ENCODE measurements at regions of chr11 and their contacts with region 1.

Region 1: GRCh38 chr11:47454180-47454644 is 5.3 kb upstream of the RAPSN start:
- DNase-seq: peak in 8 of 9 donors; percentile 51 to 76 (median 68)
- ATAC-seq: peak; percentile 99
- H3K4me3 ChIP-seq: no peak overlapping the region
- H3K4me3 Mint-ChIP-seq: peak overlapping the region in 1 of 10 donors; percentile 41
- H3K27ac ChIP-seq: no peak overlapping the region
- H3K27ac Mint-ChIP-seq: peak overlapping the region in 6 of 9 donors; percentile 16 to 49 (median 44)
- H3K4me1 ChIP-seq: no peaks in the 10 kb centered on the region
- H3K4me1 Mint-ChIP-seq: peaks cover 0 to 7% (median 4%) of the 10 kb centered on the region in 7 donors
- H3K27me3 ChIP-seq: no peaks in the 10 kb centered on the region
- H3K27me3 Mint-ChIP-seq: no peaks in the 10 kb centered on the region

Region 2: DNA sequence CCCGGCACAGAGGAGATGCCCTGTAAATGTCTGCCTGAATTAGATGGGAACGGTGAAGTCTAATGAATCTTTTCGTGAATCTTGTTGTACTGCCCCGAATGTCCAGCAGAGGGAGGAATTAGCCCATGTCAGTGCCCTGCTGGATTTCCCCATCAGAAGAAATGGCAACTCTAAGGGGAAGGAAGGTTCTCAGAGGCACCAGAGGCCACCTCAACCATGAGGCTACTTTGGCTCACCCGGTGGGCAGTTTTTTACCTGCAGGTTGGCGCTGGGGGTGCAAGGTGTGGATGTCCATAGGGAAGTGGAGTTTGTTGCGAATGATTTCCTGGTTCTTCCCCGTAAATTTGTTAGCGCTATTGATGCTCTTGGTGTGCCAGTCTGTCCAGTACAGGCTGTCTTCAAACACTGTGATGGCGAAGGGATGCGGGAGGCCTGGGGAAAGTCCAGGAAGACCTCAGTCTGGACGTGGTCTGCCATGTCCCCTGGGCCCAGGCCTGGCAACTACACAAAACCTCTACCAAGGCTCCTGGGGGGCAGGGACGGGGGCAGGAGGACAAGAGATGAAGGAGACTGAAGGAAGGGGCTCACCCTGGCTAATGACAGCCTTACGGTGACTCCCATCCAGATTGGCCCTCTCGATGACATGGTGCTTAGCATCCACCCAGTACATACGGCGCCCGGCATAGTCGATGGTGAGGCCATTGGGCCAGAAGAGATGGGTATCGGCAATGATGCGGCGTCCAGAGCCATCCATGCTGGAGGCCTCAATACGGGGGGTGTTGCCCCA is 564.3 kb before region 1 on chr11:
- CTCF ChIA-PET with region 1: no interaction called
- POLR2A ChIA-PET with region 1: no interaction called
- intact Hi-C with region 1: loop called in 1 of 2 experiments (anchors 1 kb)
- DNase-seq: peak; percentile 40 to 80 (median 72)
- ATAC-seq: peak; percentile 95
- H3K4me3 ChIP-seq: no peak overlapping the region
- H3K4me3 Mint-ChIP-seq: no peak overlapping the region
- H3K27ac ChIP-seq: no peak overlapping the region
- H3K27ac Mint-ChIP-seq: no peak overlapping the region
- H3K4me1 ChIP-seq: no peaks in the 10 kb centered on the region
- H3K4me1 Mint-ChIP-seq: peaks cover 0 to 6% (median 0%) of the 10 kb centered on the region in 7 donors
- H3K27me3 ChIP-seq: no peaks in the 10 kb centered on the region
- H3K27me3 Mint-ChIP-seq: peaks cover 0 to 7% (median 0%) of the 10 kb centered on the region in 5 donors

Region 3: GRCh38 chr11:47233989-47234668 is 220.1 kb before region 1 on chr11:
- CTCF ChIA-PET with region 1: interaction called, 3 read pairs
- POLR2A ChIA-PET with region 1: no interaction called
- intact Hi-C with region 1: loop called in 1 of 2 experiments (anchors 1 kb)
- DNase-seq: peak in 6 of 9 donors; percentile 17 to 46 (median 32)
- ATAC-seq: peak; percentile 8
- H3K4me3 ChIP-seq: peak overlapping the region; percentile 38
- H3K4me3 Mint-ChIP-seq: peak overlapping the region; percentile 35 to 90 (median 80)
- H3K27ac ChIP-seq: peak overlapping the region; percentile 81
- H3K27ac Mint-ChIP-seq: peak overlapping the region; percentile 77 to 99 (median 94)
- H3K4me1 ChIP-seq: peaks cover 5 to 13% of the 10 kb centered on the region in 2 donors
- H3K4me1 Mint-ChIP-seq: peaks cover 11 to 34% (median 30%) of the 10 kb centered on the region in 7 donors
- H3K27me3 ChIP-seq: no peaks in the 10 kb centered on the region
- H3K27me3 Mint-ChIP-seq: no peaks in the 10 kb centered on the region

Region 4: DNA sequence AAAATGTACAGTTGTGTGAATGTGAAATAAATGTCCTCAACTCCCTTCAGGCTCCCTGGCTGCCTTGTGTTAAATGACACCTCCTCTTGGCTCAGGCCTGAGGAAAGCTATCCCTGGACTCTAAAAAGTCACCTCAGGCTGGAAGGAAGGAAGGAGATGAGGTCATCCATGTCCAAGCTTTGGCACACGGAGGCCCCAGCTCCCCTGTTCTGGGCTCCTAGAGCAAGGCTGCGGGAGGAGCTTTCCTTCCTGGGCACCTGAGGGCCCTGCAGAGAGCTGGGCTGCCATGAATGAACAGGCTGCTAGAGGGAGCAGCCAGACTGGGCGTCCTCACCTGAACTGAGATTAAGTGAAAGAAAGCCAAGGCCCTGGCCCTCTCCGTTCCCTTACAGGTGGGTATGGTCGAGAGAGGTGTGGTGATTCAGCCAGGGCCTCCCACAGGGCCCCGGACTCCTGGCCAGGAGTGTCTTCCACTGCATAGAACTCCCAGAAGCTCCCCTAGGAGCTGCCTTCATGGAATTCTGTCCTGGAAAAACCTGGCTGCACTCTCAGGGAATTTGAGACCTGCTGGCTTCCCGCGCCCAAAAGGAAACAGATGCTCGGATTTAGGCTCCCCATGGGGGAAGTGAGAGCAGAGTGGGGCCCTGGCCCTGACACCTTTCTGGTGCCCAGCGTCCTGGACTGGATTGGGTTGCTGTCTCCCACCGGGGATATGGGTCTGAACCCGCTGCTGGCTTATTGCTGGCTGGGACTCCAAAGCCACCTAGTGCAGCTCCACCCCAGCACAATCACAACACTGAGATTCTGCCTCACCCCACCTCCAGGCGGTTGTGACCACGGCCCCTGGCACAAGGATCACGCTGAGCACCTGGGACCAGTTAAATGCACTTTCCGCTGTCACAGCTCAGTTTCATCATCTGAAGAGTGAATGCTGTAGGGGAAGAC is 124.0 kb before region 1 on chr11:
- CTCF ChIA-PET with region 1: interaction called, 3 read pairs
- POLR2A ChIA-PET with region 1: no interaction called
- intact Hi-C with region 1: loop called in 1 of 2 experiments (anchors 1 kb)
- DNase-seq: peak in 2 of 9 donors; percentile 11 to 13
- ATAC-seq: no peak
- H3K4me3 ChIP-seq: no peak overlapping the region
- H3K4me3 Mint-ChIP-seq: no peak overlapping the region
- H3K27ac ChIP-seq: no peak overlapping the region
- H3K27ac Mint-ChIP-seq: peak overlapping the region in 4 of 9 donors; percentile 5 to 67 (median 51)
- H3K4me1 ChIP-seq: no peaks in the 10 kb centered on the region
- H3K4me1 Mint-ChIP-seq: no peaks in the 10 kb centered on the region
- H3K27me3 ChIP-seq: no peaks in the 10 kb centered on the region
- H3K27me3 Mint-ChIP-seq: no peaks in the 10 kb centered on the region

Region 5: GRCh38 chr11:47373876-47374720 is 80.1 kb before region 1 on chr11:
- CTCF ChIA-PET with region 1: interaction called, 10 read pairs
- POLR2A ChIA-PET with region 1: interaction called, 4 read pairs
- intact Hi-C with region 1: loop called (anchors 1 kb)
- DNase-seq: peak; percentile 69 to 91 (median 82)
- ATAC-seq: peak; percentile 84
- H3K4me3 ChIP-seq: no peak overlapping the region
- H3K4me3 Mint-ChIP-seq: peak overlapping the region in 1 of 10 donors; percentile 51
- H3K27ac ChIP-seq: no peak overlapping the region
- H3K27ac Mint-ChIP-seq: peak overlapping the region in 3 of 9 donors; percentile 48 to 72 (median 65)
- H3K4me1 ChIP-seq: peaks cover 0 to 3% of the 10 kb centered on the region in 2 donors
- H3K4me1 Mint-ChIP-seq: peaks cover 5 to 18% (median 9%) of the 10 kb centered on the region in 7 donors
- H3K27me3 ChIP-seq: no peaks in the 10 kb centered on the region
- H3K27me3 Mint-ChIP-seq: no peaks in the 10 kb centered on the region

Region 6: GRCh38 chr11:47917643-47918369 is 463.6 kb after region 1 on chr11:
- CTCF ChIA-PET with region 1: no interaction called
- POLR2A ChIA-PET with region 1: no interaction called
- intact Hi-C with region 1: no loop called
- DNase-seq: no peak
- ATAC-seq: peak; percentile 71
- H3K4me3 ChIP-seq: no peak overlapping the region
- H3K4me3 Mint-ChIP-seq: peak overlapping the region in 1 of 10 donors; percentile 24
- H3K27ac ChIP-seq: no peak overlapping the region
- H3K27ac Mint-ChIP-seq: peak overlapping the region; percentile 4 to 86 (median 60)
- H3K4me1 ChIP-seq: peaks cover 39 to 42% of the 10 kb centered on the region in 2 donors
- H3K4me1 Mint-ChIP-seq: peaks cover 27 to 77% (median 65%) of the 10 kb centered on the region in 7 donors
- H3K27me3 ChIP-seq: no peaks in the 10 kb centered on the region
- H3K27me3 Mint-ChIP-seq: no peaks in the 10 kb centered on the region

Measured in naive thymus-derived CD4-positive, alpha-beta T cell (primary cell).